ENCODE measurements at regions of chr1 and their contacts with region 1.

Region 1: DNA sequence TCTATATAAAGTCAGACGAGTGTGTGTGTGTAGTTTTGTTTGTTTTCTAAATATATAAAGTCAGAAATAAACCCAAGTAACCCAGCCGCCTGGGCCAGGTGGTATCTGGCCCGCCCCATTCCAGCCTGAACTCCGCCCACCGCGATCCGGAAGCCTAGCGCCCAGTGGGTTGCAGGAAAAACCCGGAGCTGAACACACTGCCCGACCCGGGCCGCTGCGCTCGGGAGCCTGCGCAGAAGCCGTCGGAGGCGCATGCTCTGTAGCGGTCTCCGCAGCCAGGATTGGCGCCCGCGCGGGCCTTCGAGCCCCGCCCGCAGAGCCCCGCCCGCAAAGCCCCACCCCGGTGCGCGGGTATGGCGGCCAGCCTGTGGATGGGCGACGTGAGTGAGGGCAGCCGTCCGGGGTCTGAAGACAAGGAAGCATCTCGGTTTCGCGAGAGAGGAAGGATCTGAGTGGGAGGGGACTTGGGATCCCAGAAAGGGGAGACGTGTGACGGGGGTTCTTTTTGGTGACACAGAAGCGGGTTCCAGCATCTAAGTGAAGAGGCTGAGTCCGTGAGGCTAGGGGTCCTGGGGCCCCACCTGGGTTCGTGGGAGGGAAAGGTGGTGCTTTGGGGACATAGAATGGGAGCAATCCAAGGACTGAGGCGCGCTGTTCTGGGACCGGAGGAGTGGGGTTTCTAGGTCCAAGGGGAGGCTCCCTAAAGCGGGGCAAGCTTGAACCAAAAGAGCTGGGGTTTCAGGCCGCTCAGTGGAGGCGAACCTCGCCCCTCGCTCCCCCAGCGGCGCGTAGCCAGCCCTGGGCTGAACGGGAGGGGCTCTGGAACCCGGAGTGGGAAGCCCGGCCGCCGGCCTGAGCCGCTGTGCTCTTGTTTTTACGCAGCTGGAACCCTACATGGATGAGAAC is at the start of gene TRNAU1AP:
- DNase-seq: peak; percentile 94 to 98 (median 96)
- ATAC-seq: peak; percentile 89 to 91
- H3K4me3 Mint-ChIP-seq: peak within 1 kb of the TSS; percentile 96 to 100 (median 98)
- H3K27ac Mint-ChIP-seq: peak within 1 kb of the TSS; percentile 94 to 99 (median 98)
- H3K4me1 Mint-ChIP-seq: peaks cover 9 to 30% (median 21%) of the 10 kb centered on the region in 4 donors
- H3K27me3 Mint-ChIP-seq: no peaks in the 10 kb centered on the region
- polyA plus RNA-seq, gene TRNAU1AP: 21.5 to 25.3 (median 22.6) TPM

Region 2: GRCh38 chr1:28565040-28565439 is 12.0 kb after region 1 on chr1:
- POLR2A ChIA-PET with region 1: interaction called, 10 read pairs
- DNase-seq: no peak
- ATAC-seq: no peak
- H3K4me3 Mint-ChIP-seq: no peak overlapping the region
- H3K27ac Mint-ChIP-seq: peak overlapping the region in 2 of 10 donors; percentile 20 to 75
- H3K4me1 Mint-ChIP-seq: no peaks in the 10 kb centered on the region
- H3K27me3 Mint-ChIP-seq: no peaks in the 10 kb centered on the region

Region 3: GRCh38 chr1:28642847-28643635 is 90.0 kb after region 1 on chr1 and contains the start of gene TAF12:
- POLR2A ChIA-PET with region 1: interaction called, 15 read pairs
- DNase-seq: peak; percentile 78 to 95 (median 90)
- ATAC-seq: peak; percentile 85 to 86
- H3K4me3 Mint-ChIP-seq: peak within 1 kb of the TSS; percentile 96 to 100 (median 99)
- H3K27ac Mint-ChIP-seq: peak within 1 kb of the TSS; percentile 96 to 99 (median 98)
- H3K4me1 Mint-ChIP-seq: peaks cover 24 to 71% (median 57%) of the 10 kb centered on the region in 4 donors
- H3K27me3 Mint-ChIP-seq: no peaks in the 10 kb centered on the region
- polyA plus RNA-seq, gene TAF12: 42.4 to 50.1 (median 47.3) TPM